ENCODE measurements at regions of chr10 and their contacts with region 1.

Region 1: DNA sequence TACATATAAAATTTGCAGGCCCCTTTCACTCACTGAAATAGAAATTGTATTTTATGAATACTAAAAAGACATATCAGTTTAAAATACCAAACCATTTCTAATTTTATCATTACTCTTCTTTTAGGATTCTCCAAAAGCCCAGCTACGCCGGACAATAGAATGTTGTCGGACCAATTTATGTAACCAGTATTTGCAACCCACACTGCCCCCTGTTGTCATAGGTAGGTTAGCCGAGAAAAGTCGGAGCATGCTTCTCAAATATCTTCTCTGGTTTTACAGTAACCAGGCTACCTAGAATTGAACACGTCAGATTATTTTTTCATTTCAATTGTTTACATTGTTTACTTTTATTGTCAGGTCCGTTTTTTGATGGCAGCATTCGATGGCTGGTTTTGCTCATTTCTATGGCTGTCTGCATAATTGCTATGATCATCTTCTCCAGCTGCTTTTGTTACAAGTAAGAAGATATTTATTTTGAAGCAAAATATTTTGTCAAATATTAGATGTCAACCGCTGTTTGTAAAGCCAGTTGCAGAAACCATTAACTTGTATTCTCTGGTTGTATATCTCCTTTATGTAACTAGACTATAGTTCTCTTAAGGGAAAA is 57.6 kb downstream of the MMRN2 start:
- DNase-seq: peak in 4 of 5 donors; percentile 54 to 73 (median 64)
- ATAC-seq: peak in 3 of 4 donors; percentile 35 to 63 (median 58)
- H3K4me3 ChIP-seq: no peak overlapping the region
- H3K27ac ChIP-seq: peak overlapping the region in 7 of 12 donors; percentile 20 to 87 (median 64)
- H3K4me1 ChIP-seq: peaks cover 0 to 37% (median 18%) of the 10 kb centered on the region in 12 donors
- H3K27me3 ChIP-seq: peaks cover 0 to 6% (median 0%) of the 10 kb centered on the region in 9 donors
- CTCF ChIP-seq: peak; percentile 60 to 85 (median 78)
- POLR2A ChIP-seq: no peak

Region 2: GRCh38 chr10:86644152-86644793 is 255.5 kb before region 1 on chr10:
- intact Hi-C with region 1: loop called in 1 of 10 experiments (anchors 5 kb)
- DNase-seq: peak in 2 of 5 donors; percentile 61 to 66
- ATAC-seq: peak in 2 of 4 donors; percentile 3 to 20
- H3K4me3 ChIP-seq: no peak overlapping the region
- H3K27ac ChIP-seq: peak overlapping the region in 1 of 12 donors; percentile 5
- H3K4me1 ChIP-seq: peaks cover 0 to 29% (median 15%) of the 10 kb centered on the region in 12 donors
- H3K27me3 ChIP-seq: no peaks in the 10 kb centered on the region
- CTCF ChIP-seq: peak in 7 of 12 donors; percentile 9 to 41 (median 21)
- POLR2A ChIP-seq: no peak

Region 3: GRCh38 chr10:86693721-86694369 is 205.9 kb before region 1 on chr10:
- intact Hi-C with region 1: loop called in 8 of 10 experiments (anchors 2 to 5 kb)
- DNase-seq: no peak
- ATAC-seq: no peak
- H3K4me3 ChIP-seq: peak overlapping the region in 1 of 12 donors; percentile 6
- H3K27ac ChIP-seq: peak overlapping the region in 7 of 12 donors; percentile 5 to 99 (median 68)
- H3K4me1 ChIP-seq: peaks cover 0 to 45% (median 18%) of the 10 kb centered on the region in 12 donors
- H3K27me3 ChIP-seq: no peaks in the 10 kb centered on the region
- CTCF ChIP-seq: peak; percentile 31 to 73 (median 53)
- POLR2A ChIP-seq: no peak

Region 4: GRCh38 chr10:86730227-86730626 is 169.5 kb before region 1 on chr10:
- intact Hi-C with region 1: loop called in 1 of 10 experiments (anchors 5 kb)
- DNase-seq: peak in 4 of 5 donors; percentile 60 to 76 (median 64)
- ATAC-seq: peak; percentile 17 to 50 (median 24)
- H3K4me3 ChIP-seq: no peak overlapping the region
- H3K27ac ChIP-seq: peak overlapping the region in 9 of 12 donors; percentile 23 to 94 (median 65)
- H3K4me1 ChIP-seq: peaks cover 0 to 84% (median 29%) of the 10 kb centered on the region in 12 donors
- H3K27me3 ChIP-seq: no peaks in the 10 kb centered on the region
- CTCF ChIP-seq: no peak
- POLR2A ChIP-seq: no peak

Region 5: DNA sequence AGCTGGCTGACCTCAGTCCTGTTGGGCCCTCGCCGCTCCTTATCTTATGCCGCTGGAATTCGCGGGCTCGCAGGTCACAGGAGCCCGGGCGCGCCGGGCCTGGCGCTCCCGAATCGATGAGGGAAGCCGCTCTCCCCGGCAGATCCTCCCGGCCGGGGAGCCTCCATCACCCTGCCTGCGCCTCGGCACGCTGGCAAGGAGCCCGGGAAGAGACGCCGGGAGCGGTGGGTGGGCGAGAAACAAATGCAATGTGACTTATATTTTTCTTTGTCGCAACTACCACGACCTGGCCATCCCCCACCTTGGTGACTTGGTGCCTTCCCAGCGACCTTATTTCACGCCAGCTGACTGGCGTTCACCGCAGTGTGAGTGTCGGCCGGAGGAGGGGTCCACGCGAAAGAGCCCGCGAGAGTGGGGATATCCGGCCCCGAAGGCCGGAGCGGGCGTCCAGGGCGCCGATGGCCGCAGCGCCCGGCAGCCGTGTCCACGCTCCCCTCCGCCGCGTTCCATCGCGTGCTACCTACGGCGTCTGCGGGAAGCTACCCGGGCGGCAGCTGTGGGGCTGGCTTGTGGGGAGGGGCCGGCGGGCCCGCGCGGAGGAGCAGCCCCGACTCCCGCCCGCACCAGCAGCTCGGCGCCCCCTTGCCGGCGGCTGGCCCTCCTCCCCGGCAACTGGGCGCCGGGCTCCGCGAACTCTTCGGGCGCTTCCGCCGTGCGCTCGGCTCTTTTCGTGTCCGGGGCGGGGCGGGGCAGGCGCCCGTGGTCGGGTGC is 143.8 kb before region 1 on chr10:
- intact Hi-C with region 1: loop called in 5 of 10 experiments (anchors 1 to 10 kb)
- DNase-seq: peak; percentile 84 to 95 (median 91)
- ATAC-seq: peak; percentile 83 to 88 (median 88)
- H3K4me3 ChIP-seq: peak overlapping the region; percentile 58 to 83 (median 78)
- H3K27ac ChIP-seq: peak overlapping the region; percentile 83 to 100 (median 98)
- H3K4me1 ChIP-seq: peaks cover 0 to 45% (median 17%) of the 10 kb centered on the region in 12 donors
- H3K27me3 ChIP-seq: peaks cover 0 to 46% (median 8%) of the 10 kb centered on the region in 9 donors
- CTCF ChIP-seq: no peak
- POLR2A ChIP-seq: peak; percentile 77 to 85

Measured in heart left ventricle (tissue), 16 donors.